PC-3 (cell line): ENCODE measurements at regions of chr12 and their contacts with region 1.

Region 1: DNA sequence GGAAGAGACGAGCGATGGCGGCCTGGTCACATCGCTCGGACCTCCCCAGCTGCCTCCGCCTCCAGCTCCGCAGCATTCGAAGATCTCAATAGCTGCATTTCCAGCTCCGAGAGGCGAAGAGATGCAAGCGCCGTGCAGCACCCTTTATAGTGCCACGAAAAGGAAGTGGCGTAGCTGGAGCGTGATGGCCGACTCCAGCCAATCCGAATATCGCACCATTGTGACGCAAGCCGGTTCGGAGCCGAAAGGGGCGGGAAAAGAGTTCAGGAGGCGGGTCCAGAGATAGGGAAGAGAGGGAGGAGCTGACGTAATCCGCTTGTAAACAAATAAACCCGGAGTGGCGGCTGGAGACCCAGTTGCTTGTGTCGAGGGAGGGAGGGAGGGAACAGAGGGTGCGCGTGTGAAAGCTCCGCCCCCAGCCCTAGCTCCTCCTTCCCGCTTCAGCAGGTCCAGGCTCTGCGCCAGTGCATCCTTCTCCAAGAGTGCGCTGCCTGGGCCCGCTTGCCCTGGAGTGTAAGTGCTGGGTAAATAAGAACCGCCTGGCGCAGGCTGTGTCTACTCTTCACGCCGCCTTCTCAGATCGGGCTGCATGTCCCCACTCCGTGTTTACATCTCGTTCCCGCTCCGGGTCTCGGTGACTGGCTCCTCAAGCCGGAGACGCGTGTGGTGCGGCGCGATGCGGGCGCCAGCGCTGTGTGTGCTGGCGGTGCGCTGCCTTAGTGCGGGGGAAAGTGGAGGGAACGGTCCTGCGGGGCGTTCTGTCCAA is at the start of gene BTG1:
- DNase-seq: peak; percentile 100
- ATAC-seq: peak; percentile 77
- H3K4me3 ChIP-seq: peak within 1 kb of the TSS; percentile 87
- H3K27ac ChIP-seq: peak within 1 kb of the TSS; percentile 73
- H3K4me1 ChIP-seq: peaks cover 13% of the 10 kb centered on the region
- H3K27me3 ChIP-seq: no peaks in the 10 kb centered on the region
- CTCF ChIP-seq: no peak
- total RNA-seq, gene BTG1: 16.0 and 29.8 TPM in 2 replicates

Region 2: GRCh38 chr12:91413581-91414546 is 732.0 kb before region 1 on chr12:
- CTCF ChIA-PET with region 1: no interaction called
- POLR2A ChIA-PET with region 1: interaction called, 11 read pairs
- intact Hi-C with region 1: no loop called
- DNase-seq: peak; percentile 95
- ATAC-seq: peak; percentile 99
- H3K4me3 ChIP-seq: peak overlapping the region; percentile 1; the same call in 1 of the 2 replicates
- H3K27ac ChIP-seq: peak overlapping the region; percentile 67
- H3K4me1 ChIP-seq: peaks cover 18% of the 10 kb centered on the region
- H3K27me3 ChIP-seq: no peaks in the 10 kb centered on the region
- CTCF ChIP-seq: no peak

Region 3: GRCh38 chr12:91753649-91754048 is 392.3 kb before region 1 on chr12:
- CTCF ChIA-PET with region 1: no interaction called
- POLR2A ChIA-PET with region 1: no interaction called
- intact Hi-C with region 1: no loop called
- DNase-seq: no peak
- ATAC-seq: no peak
- H3K4me3 ChIP-seq: no peak overlapping the region
- H3K27ac ChIP-seq: no peak overlapping the region
- H3K4me1 ChIP-seq: no peaks in the 10 kb centered on the region
- H3K27me3 ChIP-seq: no peaks in the 10 kb centered on the region
- CTCF ChIP-seq: no peak

Region 4: DNA sequence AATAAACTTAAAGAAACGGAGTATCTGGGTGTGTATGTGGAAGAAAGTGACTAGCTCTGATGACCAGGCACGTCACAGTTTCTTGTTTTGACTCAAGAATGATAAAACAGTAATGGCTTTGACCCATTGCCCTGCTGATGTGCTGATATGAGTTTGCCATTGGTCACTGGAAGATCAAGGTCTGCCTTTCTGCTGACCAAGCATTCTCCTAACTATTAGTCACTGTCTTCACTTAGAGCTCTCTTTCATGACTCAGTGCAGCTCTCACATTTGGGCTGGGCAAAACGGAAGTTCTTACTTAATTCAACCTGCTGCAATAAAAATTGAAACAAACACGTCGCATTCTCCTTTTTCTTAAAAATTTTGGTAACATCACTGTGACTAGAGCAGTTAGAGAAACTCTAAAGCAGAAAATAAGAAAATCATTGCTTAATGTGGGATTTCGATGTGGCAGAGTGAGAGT is 366.9 kb before region 1 on chr12:
- CTCF ChIA-PET with region 1: no interaction called
- POLR2A ChIA-PET with region 1: interaction called, 12 read pairs
- intact Hi-C with region 1: no loop called
- DNase-seq: peak; percentile 97
- ATAC-seq: peak; percentile 87
- H3K4me3 ChIP-seq: peak overlapping the region; percentile 38
- H3K27ac ChIP-seq: peak overlapping the region; percentile 99
- H3K4me1 ChIP-seq: peaks cover 47% of the 10 kb centered on the region
- H3K27me3 ChIP-seq: no peaks in the 10 kb centered on the region
- CTCF ChIP-seq: no peak

Region 5: GRCh38 chr12:91890742-91891141 is 255.2 kb before region 1 on chr12:
- CTCF ChIA-PET with region 1: no interaction called
- POLR2A ChIA-PET with region 1: no interaction called
- intact Hi-C with region 1: loop called (anchors 5 kb)
- DNase-seq: peak; percentile 75
- ATAC-seq: 0 out of 2 replicates have a peak, but pooled peaks have one; percentile 31
- H3K4me3 ChIP-seq: no peak overlapping the region
- H3K27ac ChIP-seq: no peak overlapping the region
- H3K4me1 ChIP-seq: peaks cover 58% of the 10 kb centered on the region
- H3K27me3 ChIP-seq: no peaks in the 10 kb centered on the region
- CTCF ChIP-seq: no peak

Region 6: GRCh38 chr12:92085040-92085735 is 60.7 kb before region 1 on chr12:
- CTCF ChIA-PET with region 1: no interaction called
- POLR2A ChIA-PET with region 1: interaction called, 3 read pairs
- intact Hi-C with region 1: loop called (anchors 2 kb)
- DNase-seq: no peak
- ATAC-seq: peak; percentile 7; the same call in 1 of the 2 replicates
- H3K4me3 ChIP-seq: no peak overlapping the region
- H3K27ac ChIP-seq: peak overlapping the region; percentile 61
- H3K4me1 ChIP-seq: peaks cover 44% of the 10 kb centered on the region
- H3K27me3 ChIP-seq: no peaks in the 10 kb centered on the region
- CTCF ChIP-seq: no peak

Region 7: DNA sequence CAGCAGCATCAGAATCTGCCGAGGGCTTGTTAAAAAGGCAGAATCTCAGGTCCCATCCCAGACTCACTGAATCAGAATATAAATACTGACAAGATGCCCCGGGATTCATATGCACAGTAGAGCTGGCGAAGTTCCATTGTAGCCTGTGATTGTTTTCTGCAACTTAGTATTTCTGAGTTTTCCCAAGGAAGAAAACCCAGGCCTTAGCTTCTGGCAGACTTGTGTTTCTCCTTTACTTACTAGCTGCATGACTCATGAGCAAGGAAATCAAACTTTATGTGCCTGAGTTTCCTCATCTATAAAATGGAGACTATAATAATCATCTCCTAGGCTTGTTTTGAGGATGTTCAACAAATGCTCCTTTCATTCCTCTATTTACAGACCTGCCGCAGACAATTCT is 278.4 kb after region 1 on chr12:
- CTCF ChIA-PET with region 1: no interaction called
- POLR2A ChIA-PET with region 1: no interaction called
- intact Hi-C with region 1: loop called (anchors 5 kb)
- DNase-seq: peak; percentile 78
- ATAC-seq: peak; percentile 83
- H3K4me3 ChIP-seq: no peak overlapping the region; the same call in 1 of the 2 replicates
- H3K27ac ChIP-seq: peak overlapping the region; percentile 66
- H3K4me1 ChIP-seq: peaks cover 35% of the 10 kb centered on the region
- H3K27me3 ChIP-seq: no peaks in the 10 kb centered on the region
- CTCF ChIP-seq: no peak

Region 8: GRCh38 chr12:92471551-92471950 is 325.6 kb after region 1 on chr12:
- CTCF ChIA-PET with region 1: no interaction called
- POLR2A ChIA-PET with region 1: no interaction called
- intact Hi-C with region 1: no loop called
- DNase-seq: no peak
- ATAC-seq: no peak
- H3K4me3 ChIP-seq: no peak overlapping the region
- H3K27ac ChIP-seq: no peak overlapping the region
- H3K4me1 ChIP-seq: peaks cover 11% of the 10 kb centered on the region
- H3K27me3 ChIP-seq: no peaks in the 10 kb centered on the region
- CTCF ChIP-seq: no peak